HEK293 (cell line): ENCODE measurements at regions of chr11 and their contacts with region 1.

Region 1: GRCh38 chr11:121318848-121319834 is 26.6 kb downstream of the SC5D start:
- H3K4me3 ChIP-seq: no peak overlapping the region
- H3K27ac ChIP-seq: no peak overlapping the region
- H3K4me1 ChIP-seq: no peaks in the 10 kb centered on the region
- CTCF ChIP-seq: no peak; the same call in 1 of the 2 replicates

Region 2: DNA sequence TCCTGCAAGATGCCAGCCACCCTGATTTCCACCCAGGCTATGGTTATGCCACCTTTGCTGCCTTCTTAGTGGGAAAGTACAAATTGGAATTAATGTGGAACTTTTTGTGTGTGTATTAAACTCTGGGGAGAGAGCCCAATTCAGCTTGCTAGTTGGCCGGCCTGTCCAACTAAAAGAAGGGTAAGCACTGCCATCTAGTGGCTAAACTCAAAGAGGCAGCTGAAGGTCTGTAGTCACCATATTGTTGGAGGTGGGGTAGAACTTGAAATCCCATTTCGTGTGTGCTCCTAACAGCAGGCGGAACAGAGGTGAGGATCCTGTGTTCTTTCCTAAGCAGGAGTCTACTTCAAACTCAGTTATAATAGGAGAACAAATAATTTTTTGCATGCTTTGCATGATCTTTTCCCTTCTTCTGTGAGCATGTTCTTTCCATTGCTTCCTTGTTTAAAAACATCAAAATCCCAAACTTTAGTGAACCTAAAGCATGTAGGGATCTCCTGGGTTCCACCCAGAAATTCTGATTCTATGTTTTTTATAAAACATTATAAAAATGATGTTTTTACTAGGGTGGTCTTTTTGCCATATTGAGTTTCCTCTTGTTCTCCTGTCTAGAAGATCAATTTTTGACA is 272.4 kb after region 1 on chr11:
- CTCF ChIA-PET with region 1: interaction called, 20 read pairs
- POLR2A ChIA-PET with region 1: no interaction called
- H3K4me3 ChIP-seq: no peak overlapping the region
- H3K27ac ChIP-seq: no peak overlapping the region
- H3K4me1 ChIP-seq: no peaks in the 10 kb centered on the region
- CTCF ChIP-seq: no peak